ENCODE measurements at regions of chr5 and their contacts with region 1.

Region 1: DNA sequence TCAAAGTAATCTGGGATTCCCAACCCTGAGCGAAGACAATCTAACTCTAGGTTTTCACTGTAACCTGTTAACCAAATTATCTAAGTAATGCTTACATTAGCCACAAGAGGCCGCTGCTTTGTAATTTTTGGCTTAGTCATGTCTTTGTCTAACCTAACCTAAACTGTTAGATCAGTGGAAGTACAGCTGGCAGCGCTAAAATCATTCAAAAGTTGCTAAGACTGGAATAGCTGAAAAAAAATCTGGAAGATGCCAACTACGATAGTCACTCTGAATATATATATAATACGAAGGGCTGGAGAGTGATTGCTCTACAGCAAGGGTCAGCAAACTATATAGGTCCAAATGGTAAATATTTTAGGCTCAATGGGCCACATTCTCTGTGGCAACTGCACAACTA is 60.2 kb downstream of the FBXO38 start:
- DNase-seq: peak; percentile 57
- ATAC-seq: peak; percentile 89
- H3K4me3 ChIP-seq: no peak overlapping the region
- H3K27ac ChIP-seq: no peak overlapping the region
- H3K4me1 ChIP-seq: no peaks in the 10 kb centered on the region
- H3K27me3 ChIP-seq: no peaks in the 10 kb centered on the region
- CTCF ChIP-seq: peak; percentile 74; the same call in 1 of the 2 replicates

Region 2: DNA sequence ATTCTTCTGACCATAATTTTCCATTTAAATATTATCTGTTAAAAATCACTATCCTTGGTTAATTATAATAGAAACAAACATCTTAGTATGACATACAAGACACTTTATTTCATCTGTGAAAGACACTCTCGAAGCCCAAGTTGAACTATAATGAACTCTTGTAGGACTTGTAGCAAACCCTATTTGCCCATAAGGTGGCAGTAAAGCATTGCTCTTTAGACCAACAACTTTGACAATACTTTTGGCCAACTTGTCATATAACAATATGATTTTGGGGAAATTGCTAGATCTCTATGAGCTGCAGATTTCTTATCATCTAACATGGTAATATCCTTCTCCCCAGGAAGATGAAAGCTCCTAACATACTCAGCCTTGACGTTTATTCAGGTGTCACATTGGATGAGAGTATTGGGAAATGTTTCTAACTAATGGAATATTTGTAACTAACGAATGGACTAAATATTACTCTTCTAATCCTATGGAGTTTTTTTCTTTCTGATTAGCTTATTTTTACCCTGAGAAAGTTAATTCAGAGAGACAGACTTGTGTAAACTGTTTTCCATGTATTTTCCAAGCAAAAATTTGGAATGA is 264.7 kb before region 1 on chr5:
- CTCF ChIA-PET with region 1: no interaction called
- POLR2A ChIA-PET with region 1: no interaction called
- in situ Hi-C with region 1: no loop called
- intact Hi-C with region 1: loop called (anchors 5 kb)
- DNase-seq: peak; percentile 45
- ATAC-seq: peak; percentile 63; the same call in 1 of the 2 replicates
- H3K4me3 ChIP-seq: no peak overlapping the region
- H3K27ac ChIP-seq: no peak overlapping the region
- H3K4me1 ChIP-seq: no peaks in the 10 kb centered on the region
- H3K27me3 ChIP-seq: no peaks in the 10 kb centered on the region
- CTCF ChIP-seq: peak; percentile 67; the same call in 1 of the 2 replicates

Region 3: GRCh38 chr5:148297731-148298130 is 146.3 kb before region 1 on chr5:
- CTCF ChIA-PET with region 1: no interaction called
- POLR2A ChIA-PET with region 1: no interaction called
- in situ Hi-C with region 1: no loop called
- intact Hi-C with region 1: no loop called
- DNase-seq: no peak
- ATAC-seq: no peak
- H3K4me3 ChIP-seq: no peak overlapping the region
- H3K27ac ChIP-seq: no peak overlapping the region
- H3K4me1 ChIP-seq: no peaks in the 10 kb centered on the region
- H3K27me3 ChIP-seq: no peaks in the 10 kb centered on the region
- CTCF ChIP-seq: no peak

Region 4: GRCh38 chr5:148666353-148666752 is 222.4 kb after region 1 on chr5:
- CTCF ChIA-PET with region 1: no interaction called
- POLR2A ChIA-PET with region 1: no interaction called
- in situ Hi-C with region 1: no loop called
- intact Hi-C with region 1: no loop called
- DNase-seq: no peak
- ATAC-seq: no peak
- H3K4me3 ChIP-seq: no peak overlapping the region
- H3K27ac ChIP-seq: no peak overlapping the region
- H3K4me1 ChIP-seq: no peaks in the 10 kb centered on the region
- H3K27me3 ChIP-seq: no peaks in the 10 kb centered on the region; the same call in 1 of the 2 replicates
- CTCF ChIP-seq: no peak